ENCODE measurements at regions of chr18 and their contacts with region 1.

Region 1: GRCh38 chr18:55415258-55415871 is 172.6 kb downstream of the TCF4 start:
- DNase-seq: peak; percentile 89
- ATAC-seq: peak; percentile 74
- H3K4me3 Mint-ChIP-seq: no peak overlapping the region
- H3K27ac Mint-ChIP-seq: no peak overlapping the region
- H3K4me1 Mint-ChIP-seq: peaks cover 5% of the 10 kb centered on the region
- H3K27me3 Mint-ChIP-seq: peaks cover 4% of the 10 kb centered on the region

Region 2: DNA sequence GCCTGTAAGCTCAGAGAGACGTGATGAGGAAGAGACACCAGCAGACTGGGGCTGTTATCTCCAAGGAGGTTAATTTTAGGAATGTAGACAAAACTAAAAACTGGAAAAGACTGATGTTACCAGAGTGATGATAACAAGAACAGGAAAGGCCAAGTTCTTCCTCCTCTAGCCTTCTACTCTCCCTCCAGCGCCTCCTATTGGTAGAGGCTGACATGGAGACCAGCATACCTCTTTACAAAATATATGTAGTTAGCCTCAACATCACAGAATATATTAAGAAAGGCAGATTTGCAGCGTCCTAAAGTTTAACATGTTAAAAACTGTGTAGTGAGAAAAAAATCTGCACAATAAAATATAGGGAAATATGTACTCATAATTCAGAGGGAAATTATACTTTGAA is 106.6 kb after region 1 on chr18:
- CTCF ChIA-PET with region 1: interaction called, 6 read pairs
- POLR2A ChIA-PET with region 1: no interaction called
- intact Hi-C with region 1: loop called in 1 of 2 experiments (anchors 2 kb)
- DNase-seq: peak; percentile 59
- ATAC-seq: no peak
- H3K4me3 Mint-ChIP-seq: no peak overlapping the region
- H3K27ac Mint-ChIP-seq: no peak overlapping the region
- H3K4me1 Mint-ChIP-seq: no peaks in the 10 kb centered on the region
- H3K27me3 Mint-ChIP-seq: no peaks in the 10 kb centered on the region

Region 3: DNA sequence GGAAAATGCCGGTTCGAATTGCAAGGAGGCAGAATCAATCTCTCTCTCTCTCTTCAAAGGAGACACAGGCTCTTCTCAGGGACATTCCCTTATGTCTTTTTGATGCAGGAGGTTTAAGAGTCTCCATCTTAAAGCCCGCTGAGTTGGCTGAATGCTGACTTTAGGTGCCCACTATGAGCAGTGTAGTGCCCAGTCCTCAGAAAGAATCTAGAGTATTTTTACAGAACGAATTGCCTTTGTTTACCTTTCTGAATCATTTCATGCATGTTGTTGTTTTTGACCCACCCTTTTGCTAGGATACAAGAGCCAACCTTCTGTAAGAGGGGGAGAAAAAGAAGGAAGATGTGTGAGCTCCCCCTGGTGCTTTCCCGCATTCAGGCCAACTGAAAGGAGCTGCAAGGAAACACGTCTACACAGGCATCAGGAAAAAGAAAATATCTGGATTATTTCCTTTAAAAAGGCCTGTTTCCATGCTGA is 366.2 kb after region 1 on chr18:
- CTCF ChIA-PET with region 1: no interaction called
- POLR2A ChIA-PET with region 1: no interaction called
- intact Hi-C with region 1: loop called (anchors 2 kb)
- DNase-seq: peak; percentile 6
- ATAC-seq: no peak
- H3K4me3 Mint-ChIP-seq: no peak overlapping the region
- H3K27ac Mint-ChIP-seq: no peak overlapping the region
- H3K4me1 Mint-ChIP-seq: peaks cover 13% of the 10 kb centered on the region
- H3K27me3 Mint-ChIP-seq: peaks cover 44% of the 10 kb centered on the region

Region 4: GRCh38 chr18:56321470-56321869 is 906.1 kb after region 1 on chr18:
- CTCF ChIA-PET with region 1: no interaction called
- POLR2A ChIA-PET with region 1: no interaction called
- intact Hi-C with region 1: no loop called
- DNase-seq: no peak
- ATAC-seq: no peak
- H3K4me3 Mint-ChIP-seq: no peak overlapping the region
- H3K27ac Mint-ChIP-seq: no peak overlapping the region
- H3K4me1 Mint-ChIP-seq: no peaks in the 10 kb centered on the region
- H3K27me3 Mint-ChIP-seq: no peaks in the 10 kb centered on the region

Region 5: DNA sequence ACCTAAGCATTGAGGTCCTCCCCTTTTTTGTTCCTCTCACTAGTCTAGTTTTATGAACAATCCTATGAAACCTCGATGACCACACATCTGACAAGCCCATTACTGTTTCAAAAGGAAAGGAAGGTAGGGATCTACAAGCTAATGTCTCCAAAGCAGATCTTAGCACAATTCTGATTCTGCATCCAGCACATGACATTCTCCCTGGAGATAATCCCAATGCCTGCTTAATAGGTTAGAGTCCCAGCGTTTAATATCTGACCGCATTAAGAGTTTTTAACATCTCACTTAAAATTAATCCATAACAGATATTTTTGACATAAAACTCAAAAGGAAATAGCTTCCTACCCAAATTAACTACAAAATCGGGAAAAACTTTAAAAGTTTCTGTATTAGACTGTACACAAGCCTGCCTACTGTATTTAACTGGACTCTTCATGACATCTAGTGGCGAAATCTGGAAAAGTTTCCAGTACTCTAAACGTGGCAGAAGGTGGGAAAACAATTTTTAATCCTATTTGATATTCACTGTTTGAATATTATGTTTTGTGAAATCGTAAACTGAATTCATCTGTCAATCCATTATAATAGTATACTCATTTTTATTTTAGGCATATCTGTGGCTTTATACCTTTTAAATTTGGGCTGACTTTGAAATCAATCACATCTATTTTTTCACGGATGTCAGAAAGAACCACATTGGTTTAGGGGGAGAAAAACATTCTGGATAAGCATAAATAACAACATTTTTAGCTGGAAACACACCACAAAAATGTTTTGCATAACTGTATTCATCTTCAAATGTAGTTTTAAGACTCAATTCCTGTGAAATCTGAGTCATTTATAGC is 1160.7 kb after region 1 on chr18:
- CTCF ChIA-PET with region 1: no interaction called
- POLR2A ChIA-PET with region 1: no interaction called
- intact Hi-C with region 1: loop called (anchors 1 kb)
- DNase-seq: no peak
- ATAC-seq: no peak
- H3K4me3 Mint-ChIP-seq: no peak overlapping the region
- H3K27ac Mint-ChIP-seq: no peak overlapping the region
- H3K4me1 Mint-ChIP-seq: no peaks in the 10 kb centered on the region
- H3K27me3 Mint-ChIP-seq: peaks cover 11% of the 10 kb centered on the region

Measured in activated CD4-positive, alpha-beta T cell treated with anti-CD3 and anti-CD28 coated beads for 36 hours (primary cell).